H1 (cell line): ENCODE measurements at regions of chr10 and their contacts with region 1.

Region 1: DNA sequence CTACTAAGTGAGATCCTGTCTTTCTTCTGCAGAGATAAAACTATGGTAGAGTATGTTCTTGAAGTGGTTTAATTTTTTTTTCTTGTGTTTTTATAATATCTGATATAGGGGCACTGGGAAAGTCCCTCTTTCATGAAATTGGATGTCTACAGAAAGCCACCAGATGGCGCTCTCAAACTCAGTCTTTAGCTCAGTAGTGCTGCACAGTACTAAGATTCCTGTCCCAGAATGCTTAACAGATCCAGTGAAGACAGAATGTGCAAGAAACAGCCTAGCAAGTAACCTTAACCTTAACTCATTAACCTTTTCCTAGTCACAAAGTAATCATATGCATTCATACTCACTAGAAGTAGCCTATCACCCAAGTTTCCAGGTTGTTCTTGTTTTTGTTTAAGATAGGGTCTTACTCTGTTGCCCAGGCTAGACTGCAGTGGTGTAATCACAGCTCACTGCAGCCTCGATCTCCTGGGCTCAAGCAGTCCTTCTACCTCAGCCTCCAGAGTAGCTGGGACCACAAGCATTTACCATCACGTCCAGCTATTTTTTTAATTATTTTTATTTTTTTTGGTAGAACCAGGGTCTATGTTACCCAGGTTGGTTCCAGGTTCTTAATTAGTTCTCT is 56.7 kb downstream of the IDE start:
- DNase-seq: peak in 1 of 2 experiments; percentile 56
- H3K4me3 ChIP-seq: no peak overlapping the region
- H3K27ac ChIP-seq: no peak overlapping the region
- H3K4me1 ChIP-seq: no peaks in the 10 kb centered on the region
- H3K27me3 ChIP-seq: no peaks in the 10 kb centered on the region
- CTCF ChIP-seq: peak in 2 of 3 experiments; percentile 65 to 69; a peak in 3 of 4 replicates
- EP300 ChIP-seq: no peak
- POLR2A ChIP-seq: no peak
- RAD21 ChIP-seq: peak; percentile 65 to 72

Region 2: DNA sequence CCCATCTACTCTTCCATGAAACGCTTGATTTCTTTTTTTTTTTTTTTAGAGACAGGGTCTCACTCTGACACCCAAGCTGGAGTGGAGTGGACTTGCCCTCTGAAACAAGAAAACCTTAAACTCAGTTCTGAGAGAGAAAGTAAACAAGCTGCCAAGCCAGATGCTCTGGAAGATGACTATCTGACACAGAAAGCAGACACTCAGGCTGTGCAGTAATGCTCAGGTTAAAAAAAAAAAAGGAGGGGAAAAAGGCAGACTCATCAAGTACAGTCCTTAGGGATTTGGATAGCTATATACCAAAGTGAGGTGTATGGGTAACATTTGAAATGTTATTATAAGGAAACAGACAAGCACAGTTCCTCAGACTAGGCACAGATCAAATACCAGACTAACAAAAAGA is 23.8 kb before region 1 on chr10:
- CTCF ChIA-PET with region 1: no interaction called
- POLR2A ChIA-PET with region 1: no interaction called
- DNase-seq: no peak
- H3K4me3 ChIP-seq: no peak overlapping the region
- H3K27ac ChIP-seq: no peak overlapping the region
- H3K4me1 ChIP-seq: no peaks in the 10 kb centered on the region
- H3K27me3 ChIP-seq: no peaks in the 10 kb centered on the region
- CTCF ChIP-seq: no peak
- EP300 ChIP-seq: no peak
- POLR2A ChIP-seq: no peak
- RAD21 ChIP-seq: no peak

Region 3: DNA sequence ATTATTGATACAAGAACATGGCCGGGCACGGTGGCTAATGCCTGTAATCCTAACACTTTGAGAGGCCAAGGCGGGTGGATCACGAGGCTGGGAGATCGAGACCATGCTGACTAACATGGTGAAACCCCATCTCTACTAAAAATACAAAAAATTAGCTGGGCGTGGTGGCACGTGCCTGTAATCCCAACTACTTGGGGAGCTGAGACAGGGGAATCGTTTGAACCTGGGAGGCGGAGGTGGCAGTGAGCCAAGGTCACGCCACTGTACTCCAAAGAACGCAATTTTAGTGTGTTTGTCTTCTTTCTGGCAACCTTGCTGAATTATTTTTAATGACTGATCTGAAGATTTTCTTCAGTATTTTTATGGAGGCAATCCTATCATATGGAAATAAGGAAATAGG is 10.6 kb after region 1 on chr10:
- CTCF ChIA-PET with region 1: interaction called, 28 read pairs
- POLR2A ChIA-PET with region 1: no interaction called
- DNase-seq: no peak
- H3K4me3 ChIP-seq: no peak overlapping the region
- H3K27ac ChIP-seq: no peak overlapping the region
- H3K4me1 ChIP-seq: no peaks in the 10 kb centered on the region
- H3K27me3 ChIP-seq: no peaks in the 10 kb centered on the region
- CTCF ChIP-seq: no peak
- EP300 ChIP-seq: no peak
- POLR2A ChIP-seq: no peak
- RAD21 ChIP-seq: no peak

Region 4: DNA sequence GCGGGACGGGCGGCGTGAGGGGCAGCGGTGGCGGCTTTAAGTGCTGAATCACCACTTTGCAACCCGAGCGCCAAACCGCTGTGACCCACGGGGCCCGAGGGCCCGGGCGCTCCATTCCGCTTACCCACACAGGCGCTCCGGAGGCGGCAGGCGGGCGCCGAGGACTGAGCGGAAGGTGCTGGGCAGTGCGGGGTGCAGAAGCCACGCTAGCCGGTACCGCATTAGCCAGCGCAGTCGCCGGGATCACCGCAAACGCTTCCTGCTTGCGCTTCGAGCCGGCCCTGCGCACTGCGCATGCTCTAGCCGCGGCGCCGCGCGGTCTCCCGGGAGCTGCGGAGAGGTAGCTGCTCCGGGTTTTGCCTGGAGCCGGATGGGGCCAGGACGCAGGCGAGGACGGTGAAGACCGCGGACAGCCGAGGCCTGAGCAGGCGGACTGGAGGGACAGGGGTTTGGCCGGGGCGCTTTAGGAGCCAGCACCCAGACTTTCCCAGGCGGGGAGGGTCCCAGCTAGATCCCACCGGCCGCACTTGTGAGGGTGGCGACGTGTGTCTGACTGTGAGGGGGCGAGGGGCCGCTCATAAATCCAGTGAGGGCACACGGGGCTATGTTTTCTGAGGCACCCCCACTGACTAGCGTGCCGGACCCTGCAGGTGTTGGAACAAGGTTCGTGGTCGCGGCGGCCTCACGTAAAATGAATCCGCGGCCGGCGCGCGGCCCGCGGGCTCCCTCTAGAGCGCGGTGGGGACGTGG is 56.8 kb after region 1 on chr10 and contains the start of gene IDE:
- CTCF ChIA-PET with region 1: interaction called, 51 read pairs
- POLR2A ChIA-PET with region 1: interaction called, 21 read pairs
- DNase-seq: peak; percentile 79 to 94
- H3K4me3 ChIP-seq: peak within 1 kb of the TSS; percentile 75 to 84 (median 79)
- H3K27ac ChIP-seq: peak within 1 kb of the TSS; percentile 77; the same call in 1 of the 2 replicates
- H3K4me1 ChIP-seq: peaks cover 2 to 8% (median 3%) of the 10 kb centered on the region in 4 experiments; a peak in 4 of 7 replicates
- H3K27me3 ChIP-seq: no peaks in the 10 kb centered on the region
- CTCF ChIP-seq: peak; percentile 68 to 75 (median 73)
- EP300 ChIP-seq: peak in 1 of 2 experiments; percentile 22; a peak in 1 of 3 replicates
- POLR2A ChIP-seq: peak; percentile 63 to 76
- RAD21 ChIP-seq: peak; percentile 65 to 80
- total RNA-seq, gene IDE: 51.2 and 52.7 TPM in 2 replicates